Caco-2 (cell line): ENCODE measurements at regions of chr15 and their contacts with region 1.

Region 1: DNA sequence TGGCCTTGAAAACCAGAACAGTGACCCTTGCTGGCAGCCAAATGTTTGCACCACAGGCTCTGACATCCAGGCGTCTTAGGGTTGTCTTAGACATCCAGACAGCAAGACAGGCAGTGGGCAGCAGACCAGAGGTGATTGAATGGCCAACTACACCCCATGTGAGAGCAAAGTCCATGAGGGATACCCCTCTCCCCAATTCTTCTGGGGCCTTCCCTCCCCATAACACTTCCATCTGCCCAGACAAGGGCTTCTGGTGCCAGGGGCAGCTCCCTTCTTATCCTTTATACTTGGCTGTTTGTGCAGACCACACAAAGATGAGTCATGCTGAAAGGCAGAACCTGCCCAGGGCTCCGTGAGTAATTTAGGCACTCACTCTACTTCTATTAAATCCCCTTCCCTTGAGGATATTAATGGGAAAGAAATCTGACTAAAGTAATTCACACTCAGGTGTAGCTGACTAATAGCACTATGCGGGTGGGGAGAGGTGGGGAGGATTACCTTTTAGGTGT is 257.9 kb downstream of the UACA start:
- DNase-seq: no peak
- H3K4me3 ChIP-seq: no peak overlapping the region
- H3K4me3 Mint-ChIP-seq: no peak overlapping the region
- H3K27ac Mint-ChIP-seq: peak overlapping the region; percentile 70
- H3K4me1 ChIP-seq: peaks cover 53% of the 10 kb centered on the region
- H3K4me1 Mint-ChIP-seq: peaks cover 30% of the 10 kb centered on the region
- H3K27me3 ChIP-seq: no peaks in the 10 kb centered on the region
- H3K27me3 Mint-ChIP-seq: no peaks in the 10 kb centered on the region
- CTCF ChIP-seq: no peak

Region 2: GRCh38 chr15:70152070-70152480 is 353.4 kb before region 1 on chr15:
- CTCF ChIA-PET with region 1: no interaction called
- POLR2A ChIA-PET with region 1: no interaction called
- intact Hi-C with region 1: no loop called
- DNase-seq: no peak
- H3K4me3 ChIP-seq: no peak overlapping the region
- H3K4me3 Mint-ChIP-seq: no peak overlapping the region
- H3K27ac Mint-ChIP-seq: no peak overlapping the region
- H3K4me1 ChIP-seq: peaks cover 19% of the 10 kb centered on the region
- H3K4me1 Mint-ChIP-seq: peaks cover 31% of the 10 kb centered on the region
- H3K27me3 ChIP-seq: no peaks in the 10 kb centered on the region
- H3K27me3 Mint-ChIP-seq: no peaks in the 10 kb centered on the region
- CTCF ChIP-seq: no peak

Region 3: GRCh38 chr15:70494852-70495571 is 10.5 kb before region 1 on chr15:
- CTCF ChIA-PET with region 1: no interaction called
- POLR2A ChIA-PET with region 1: interaction called, 9 read pairs
- intact Hi-C with region 1: loop called (anchors 1 kb)
- DNase-seq: peak; percentile 94 to 97
- H3K4me3 ChIP-seq: peak overlapping the region; percentile 17; the same call in 1 of the 2 replicates
- H3K4me3 Mint-ChIP-seq: peak overlapping the region; percentile 68
- H3K27ac Mint-ChIP-seq: peak overlapping the region; percentile 98
- H3K4me1 ChIP-seq: peaks cover 41% of the 10 kb centered on the region
- H3K4me1 Mint-ChIP-seq: peaks cover 56% of the 10 kb centered on the region
- H3K27me3 ChIP-seq: no peaks in the 10 kb centered on the region
- H3K27me3 Mint-ChIP-seq: no peaks in the 10 kb centered on the region
- CTCF ChIP-seq: no peak

Region 4: DNA sequence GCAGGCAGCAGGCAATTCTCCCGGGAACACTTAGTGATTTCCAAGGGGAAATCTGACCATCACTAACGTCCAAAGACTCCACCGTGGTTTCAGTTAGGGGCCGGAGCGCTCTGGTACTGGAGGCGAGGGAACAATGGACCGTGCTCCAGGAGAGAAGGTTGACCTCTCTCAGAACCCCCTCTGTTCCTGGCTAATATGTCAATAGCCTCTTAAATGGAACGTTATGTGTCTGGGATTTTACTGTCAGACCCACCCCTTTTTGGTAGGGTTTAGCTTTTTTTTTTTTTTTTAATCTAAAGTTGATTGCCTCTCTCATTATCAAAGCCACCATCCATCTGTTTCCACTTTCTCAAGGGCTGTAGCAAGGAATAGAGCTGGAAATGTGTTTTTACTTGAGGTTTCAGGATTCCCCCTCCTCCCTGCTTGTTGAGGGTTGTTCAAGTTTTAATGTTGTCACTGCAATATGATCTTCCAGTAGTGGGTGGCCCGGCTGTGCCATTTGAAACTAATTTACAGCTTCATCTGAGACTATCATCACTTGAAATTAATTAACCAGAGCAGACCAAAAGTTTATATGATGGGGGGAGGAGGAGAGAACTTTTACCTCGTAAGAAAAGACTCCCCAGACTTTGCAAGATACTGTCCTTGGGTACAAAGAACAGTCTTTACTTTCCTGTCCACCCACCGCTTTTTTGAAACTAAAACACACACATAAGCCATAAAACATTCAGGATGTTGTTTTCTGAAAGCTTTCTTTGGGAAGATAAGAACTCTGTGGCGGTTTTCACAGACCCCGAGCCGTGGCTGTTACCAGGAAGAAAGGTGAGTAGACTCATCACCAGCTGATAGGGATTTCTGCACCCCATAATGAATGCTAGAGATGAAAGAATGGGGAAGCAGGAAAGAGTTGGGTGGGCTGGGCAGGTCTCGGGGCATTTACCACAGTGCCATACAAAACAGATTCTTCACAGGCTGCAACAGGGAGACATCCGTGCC is 70.1 kb after region 1 on chr15:
- CTCF ChIA-PET with region 1: no interaction called
- POLR2A ChIA-PET with region 1: no interaction called
- intact Hi-C with region 1: loop called (anchors 5 kb)
- DNase-seq: no peak
- H3K4me3 ChIP-seq: no peak overlapping the region
- H3K4me3 Mint-ChIP-seq: peak overlapping the region; percentile 53
- H3K27ac Mint-ChIP-seq: peak overlapping the region; percentile 71
- H3K4me1 ChIP-seq: peaks cover 11% of the 10 kb centered on the region; the same call in 1 of the 2 replicates
- H3K4me1 Mint-ChIP-seq: peaks cover 22% of the 10 kb centered on the region
- H3K27me3 ChIP-seq: no peaks in the 10 kb centered on the region
- H3K27me3 Mint-ChIP-seq: no peaks in the 10 kb centered on the region
- CTCF ChIP-seq: no peak

Region 5: DNA sequence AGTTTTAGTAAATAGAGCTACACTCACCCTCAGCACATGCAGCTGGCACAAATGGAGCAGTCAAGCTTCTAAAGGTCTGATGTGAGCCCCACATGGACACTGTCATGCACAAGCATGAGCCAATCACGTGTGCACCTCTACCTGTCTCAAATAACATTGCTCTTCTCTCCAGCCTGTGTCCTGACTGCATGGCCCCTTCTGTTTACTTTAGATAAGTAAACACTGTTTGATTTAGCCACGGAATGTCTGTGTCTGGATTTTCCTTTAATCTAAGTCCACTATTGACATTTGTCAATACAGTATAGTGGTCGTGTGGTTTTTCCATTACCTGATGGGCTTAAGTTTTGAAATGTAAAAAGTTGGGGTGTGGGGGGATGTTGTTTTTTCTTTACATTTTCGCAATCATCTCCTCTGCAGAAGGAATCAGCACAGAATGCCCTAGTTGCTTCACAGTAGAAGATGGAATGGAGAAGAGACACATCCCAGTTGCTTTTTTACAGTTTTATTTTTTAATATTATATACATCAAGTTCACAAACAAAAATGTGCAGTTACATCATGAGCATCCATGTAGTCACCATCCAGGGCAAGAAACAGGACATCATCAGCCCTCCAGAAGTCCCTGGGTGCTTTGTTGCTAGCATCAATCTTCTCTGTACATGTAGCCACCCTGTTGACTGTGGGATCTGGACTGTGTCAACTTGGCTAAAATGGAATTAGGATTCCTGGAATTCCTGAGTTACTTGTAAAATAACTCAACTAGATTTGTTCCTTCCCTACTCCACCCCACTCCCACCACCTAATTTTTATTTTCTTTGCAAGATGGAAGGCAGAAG is 111.8 kb after region 1 on chr15:
- CTCF ChIA-PET with region 1: no interaction called
- POLR2A ChIA-PET with region 1: no interaction called
- intact Hi-C with region 1: loop called (anchors 2 kb)
- DNase-seq: peak; percentile 75 to 81
- H3K4me3 ChIP-seq: no peak overlapping the region
- H3K4me3 Mint-ChIP-seq: peak overlapping the region; percentile 65
- H3K27ac Mint-ChIP-seq: peak overlapping the region; percentile 91
- H3K4me1 ChIP-seq: peaks cover 27% of the 10 kb centered on the region
- H3K4me1 Mint-ChIP-seq: peaks cover 25% of the 10 kb centered on the region
- H3K27me3 ChIP-seq: no peaks in the 10 kb centered on the region
- H3K27me3 Mint-ChIP-seq: no peaks in the 10 kb centered on the region
- CTCF ChIP-seq: no peak

Region 6: DNA sequence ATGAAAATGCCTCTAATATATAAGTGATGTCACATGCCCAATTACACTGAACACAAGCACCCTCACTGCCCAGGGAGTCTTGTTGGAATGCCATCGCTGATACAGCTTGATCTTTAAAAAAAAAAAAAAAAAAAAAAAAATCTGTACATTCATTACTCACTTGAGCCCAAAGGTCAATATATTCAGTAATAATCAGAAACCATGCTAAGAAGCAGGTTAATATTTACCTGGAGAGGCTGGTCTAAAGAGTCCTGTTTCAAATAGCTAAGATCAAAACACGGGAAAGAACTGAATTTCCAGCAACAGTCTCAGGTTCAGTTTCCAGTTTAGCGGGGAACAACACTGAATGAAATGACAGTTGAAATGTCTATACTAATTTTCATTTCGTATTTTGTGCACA is 148.0 kb after region 1 on chr15:
- CTCF ChIA-PET with region 1: no interaction called
- POLR2A ChIA-PET with region 1: interaction called, 13 read pairs
- intact Hi-C with region 1: no loop called
- DNase-seq: no peak
- H3K4me3 ChIP-seq: no peak overlapping the region
- H3K4me3 Mint-ChIP-seq: no peak overlapping the region
- H3K27ac Mint-ChIP-seq: no peak overlapping the region
- H3K4me1 ChIP-seq: peaks cover 38% of the 10 kb centered on the region
- H3K4me1 Mint-ChIP-seq: peaks cover 21% of the 10 kb centered on the region
- H3K27me3 ChIP-seq: no peaks in the 10 kb centered on the region
- H3K27me3 Mint-ChIP-seq: no peaks in the 10 kb centered on the region
- CTCF ChIP-seq: no peak